Ovary (tissue), 10 donors: ENCODE measurements at regions of chrX and their contacts with region 1.

Region 1: GRCh38 chrX:110146521-110146920 is 143.6 kb downstream of the TMEM164 start:
- DNase-seq: peak in 3 of 5 donors; percentile 22 to 63 (median 35)
- H3K4me3 ChIP-seq: no peak overlapping the region
- H3K27ac ChIP-seq: no peak overlapping the region
- H3K4me1 ChIP-seq: peaks cover 2% of the 10 kb centered on the region
- H3K27me3 ChIP-seq: no peaks in the 10 kb centered on the region
- CTCF ChIP-seq: peak in 2 of 3 donors; percentile 45 to 57
- EP300 ChIP-seq: no peak
- POLR2A ChIP-seq: no peak

Region 2: GRCh38 chrX:109902665-109903064 is 243.9 kb before region 1 on chrX:
- intact Hi-C with region 1: loop called in 1 of 4 experiments (anchors 10 kb)
- DNase-seq: no peak
- H3K4me3 ChIP-seq: no peak overlapping the region
- H3K27ac ChIP-seq: no peak overlapping the region
- H3K4me1 ChIP-seq: no peaks in the 10 kb centered on the region
- H3K27me3 ChIP-seq: no peaks in the 10 kb centered on the region
- CTCF ChIP-seq: no peak
- EP300 ChIP-seq: no peak
- POLR2A ChIP-seq: no peak

Region 3: DNA sequence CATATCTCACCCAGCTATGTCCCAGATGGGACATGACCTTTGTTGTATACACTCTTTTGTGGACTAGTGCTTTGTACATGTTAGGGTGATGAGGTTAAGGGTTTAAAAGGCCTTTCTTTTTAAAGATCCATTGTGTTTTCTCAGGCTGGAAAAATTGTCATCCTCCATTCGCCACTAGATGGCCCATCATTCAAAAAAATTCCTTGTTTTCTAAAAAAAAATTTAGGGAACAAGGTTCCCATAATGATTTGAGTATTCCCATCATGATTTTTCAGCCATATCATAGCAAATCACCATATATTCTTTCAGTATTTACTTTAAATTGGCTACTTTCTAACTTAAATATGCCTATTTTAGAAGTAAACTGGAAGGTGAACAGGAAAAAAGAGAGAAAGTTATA is 235.5 kb before region 1 on chrX:
- intact Hi-C with region 1: loop called (anchors 5 to 10 kb)
- DNase-seq: no peak
- H3K4me3 ChIP-seq: no peak overlapping the region
- H3K27ac ChIP-seq: no peak overlapping the region
- H3K4me1 ChIP-seq: no peaks in the 10 kb centered on the region
- H3K27me3 ChIP-seq: no peaks in the 10 kb centered on the region
- CTCF ChIP-seq: peak in 2 of 3 donors; percentile 40 to 44
- EP300 ChIP-seq: no peak
- POLR2A ChIP-seq: no peak

Region 4: DNA sequence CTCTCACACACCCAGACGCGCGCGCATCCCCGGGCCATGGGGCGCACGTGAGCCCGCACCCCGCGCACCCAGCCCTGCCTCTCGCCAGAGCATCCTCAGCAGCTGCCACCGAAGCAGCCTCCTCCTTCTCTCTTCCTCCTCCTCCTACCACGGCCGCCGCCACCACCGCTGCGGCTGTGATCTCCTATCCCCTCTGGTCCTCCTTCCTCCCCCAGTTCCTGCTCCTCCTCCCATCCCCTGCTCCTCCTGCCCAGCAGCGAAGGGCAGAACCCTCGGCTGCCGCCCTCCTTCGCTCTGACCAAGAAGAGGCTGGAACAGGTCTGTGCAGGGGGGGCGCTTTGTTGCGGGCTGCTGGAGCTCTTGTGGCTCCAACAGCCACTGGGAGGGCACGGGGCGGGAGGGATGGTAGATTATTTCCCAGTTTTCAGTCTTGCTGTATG is 797.8 kb after region 1 on chrX:
- intact Hi-C with region 1: no loop called
- DNase-seq: peak in 3 of 5 donors; percentile 6 to 40 (median 10)
- H3K4me3 ChIP-seq: no peak overlapping the region
- H3K27ac ChIP-seq: no peak overlapping the region
- H3K4me1 ChIP-seq: no peaks in the 10 kb centered on the region
- H3K27me3 ChIP-seq: no peaks in the 10 kb centered on the region
- CTCF ChIP-seq: no peak
- EP300 ChIP-seq: no peak
- POLR2A ChIP-seq: no peak